ENCODE measurements at regions of chr17 and their contacts with region 1.

Region 1: DNA sequence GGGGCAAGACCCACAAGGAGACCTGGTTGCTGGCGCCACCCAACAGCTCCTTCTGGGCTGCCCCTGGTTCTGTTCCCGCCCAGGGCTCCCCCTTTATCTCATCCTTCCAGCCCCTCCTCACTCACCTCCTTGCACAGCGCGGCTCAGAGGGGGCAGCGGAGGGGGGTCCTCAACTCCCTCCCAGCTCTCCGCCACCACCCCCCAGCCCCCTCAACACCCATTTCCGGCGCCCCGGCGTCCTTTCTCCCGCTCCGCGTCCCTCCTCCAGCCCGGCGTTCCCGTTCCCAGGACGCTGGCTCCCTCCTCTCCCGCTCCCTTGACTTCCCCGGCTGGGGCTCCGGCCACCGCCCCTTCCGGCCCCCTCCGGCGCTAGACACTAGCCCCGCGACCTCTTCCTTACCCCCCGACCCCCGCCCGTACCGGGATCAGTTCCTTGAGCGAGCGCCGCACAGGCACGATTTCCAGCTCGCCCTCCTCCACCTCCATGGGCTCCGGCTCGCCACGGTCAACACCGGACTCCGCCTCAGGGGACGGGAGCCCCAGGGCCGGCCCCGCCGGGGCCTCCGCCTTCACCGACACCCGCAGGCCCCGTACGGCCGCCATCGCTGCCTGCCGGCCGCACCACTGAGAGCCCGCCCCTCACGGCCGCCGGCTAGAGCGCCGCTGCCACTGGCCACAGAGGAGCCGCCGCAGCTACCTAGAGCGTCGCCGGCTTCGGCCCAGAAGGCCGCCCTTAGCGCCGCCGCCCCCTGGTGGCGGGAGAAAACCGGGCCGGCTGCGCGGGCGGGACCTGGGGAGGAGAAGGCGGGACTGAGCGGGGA is at the start of gene NCBP3:
- DNase-seq: peak; percentile 92
- ATAC-seq: peak; percentile 96
- H3K4me3 Mint-ChIP-seq: peak within 1 kb of the TSS; percentile 92
- H3K27ac Mint-ChIP-seq: peak within 1 kb of the TSS; percentile 83
- H3K4me1 Mint-ChIP-seq: peaks cover 21% of the 10 kb centered on the region
- H3K27me3 Mint-ChIP-seq: peaks cover 2% of the 10 kb centered on the region
- CTCF ChIP-seq: no peak
- total RNA-seq, gene NCBP3: 49.5 TPM in 2 replicates

Region 2: GRCh38 chr17:3695723-3696411 is 150.0 kb before region 1 on chr17 and contains the start of gene P2RX5:
- CTCF ChIA-PET with region 1: no interaction called
- POLR2A ChIA-PET with region 1: interaction called, 12 read pairs
- intact Hi-C with region 1: no loop called
- DNase-seq: peak; percentile 66
- ATAC-seq: peak; percentile 58
- H3K4me3 Mint-ChIP-seq: peak within 1 kb of the TSS; percentile 99
- H3K27ac Mint-ChIP-seq: peak within 1 kb of the TSS; percentile 97
- H3K4me1 Mint-ChIP-seq: peaks cover 77% of the 10 kb centered on the region
- H3K27me3 Mint-ChIP-seq: no peaks in the 10 kb centered on the region
- CTCF ChIP-seq: no peak
- total RNA-seq, gene P2RX5: 295 and 349 TPM in 2 replicates

Region 3: GRCh38 chr17:3747805-3748204 is 98.0 kb before region 1 on chr17:
- CTCF ChIA-PET with region 1: no interaction called
- POLR2A ChIA-PET with region 1: no interaction called
- intact Hi-C with region 1: no loop called
- DNase-seq: no peak
- ATAC-seq: no peak
- H3K4me3 Mint-ChIP-seq: no peak overlapping the region
- H3K27ac Mint-ChIP-seq: no peak overlapping the region
- H3K4me1 Mint-ChIP-seq: peaks cover 19% of the 10 kb centered on the region
- H3K27me3 Mint-ChIP-seq: peaks cover 3% of the 10 kb centered on the region
- CTCF ChIP-seq: no peak

Region 4: GRCh38 chr17:3780986-3781385 is 64.8 kb before region 1 on chr17:
- CTCF ChIA-PET with region 1: no interaction called
- POLR2A ChIA-PET with region 1: no interaction called
- intact Hi-C with region 1: no loop called
- DNase-seq: no peak
- ATAC-seq: no peak
- H3K4me3 Mint-ChIP-seq: no peak overlapping the region
- H3K27ac Mint-ChIP-seq: no peak overlapping the region
- H3K4me1 Mint-ChIP-seq: no peaks in the 10 kb centered on the region
- H3K27me3 Mint-ChIP-seq: no peaks in the 10 kb centered on the region
- CTCF ChIP-seq: no peak

Region 5: DNA sequence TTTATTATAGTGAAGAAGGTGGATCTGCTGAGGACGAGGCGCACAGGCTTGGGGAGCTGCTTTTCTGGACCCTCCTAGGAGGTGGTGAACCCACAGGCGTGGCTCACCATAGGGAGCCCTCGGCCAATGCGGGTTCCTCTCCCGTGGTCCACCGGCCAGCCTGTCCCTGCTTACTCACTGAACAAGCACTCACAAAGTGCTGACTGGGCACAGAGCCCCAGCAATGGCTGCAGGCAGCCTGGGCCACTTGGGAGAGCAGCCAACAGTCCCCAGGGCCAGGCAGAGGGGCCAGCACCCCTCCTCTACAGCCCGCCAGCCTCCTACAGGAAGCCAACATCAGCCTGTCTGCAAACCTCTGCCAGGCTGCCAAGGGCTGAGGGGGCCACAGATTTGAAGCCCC is 19.3 kb after region 1 on chr17:
- CTCF ChIA-PET with region 1: interaction called, 10 read pairs
- POLR2A ChIA-PET with region 1: no interaction called
- intact Hi-C with region 1: no loop called
- DNase-seq: no peak
- ATAC-seq: no peak
- H3K4me3 Mint-ChIP-seq: no peak overlapping the region
- H3K27ac Mint-ChIP-seq: no peak overlapping the region
- H3K4me1 Mint-ChIP-seq: no peaks in the 10 kb centered on the region
- H3K27me3 Mint-ChIP-seq: no peaks in the 10 kb centered on the region
- CTCF ChIP-seq: no peak

Region 6: DNA sequence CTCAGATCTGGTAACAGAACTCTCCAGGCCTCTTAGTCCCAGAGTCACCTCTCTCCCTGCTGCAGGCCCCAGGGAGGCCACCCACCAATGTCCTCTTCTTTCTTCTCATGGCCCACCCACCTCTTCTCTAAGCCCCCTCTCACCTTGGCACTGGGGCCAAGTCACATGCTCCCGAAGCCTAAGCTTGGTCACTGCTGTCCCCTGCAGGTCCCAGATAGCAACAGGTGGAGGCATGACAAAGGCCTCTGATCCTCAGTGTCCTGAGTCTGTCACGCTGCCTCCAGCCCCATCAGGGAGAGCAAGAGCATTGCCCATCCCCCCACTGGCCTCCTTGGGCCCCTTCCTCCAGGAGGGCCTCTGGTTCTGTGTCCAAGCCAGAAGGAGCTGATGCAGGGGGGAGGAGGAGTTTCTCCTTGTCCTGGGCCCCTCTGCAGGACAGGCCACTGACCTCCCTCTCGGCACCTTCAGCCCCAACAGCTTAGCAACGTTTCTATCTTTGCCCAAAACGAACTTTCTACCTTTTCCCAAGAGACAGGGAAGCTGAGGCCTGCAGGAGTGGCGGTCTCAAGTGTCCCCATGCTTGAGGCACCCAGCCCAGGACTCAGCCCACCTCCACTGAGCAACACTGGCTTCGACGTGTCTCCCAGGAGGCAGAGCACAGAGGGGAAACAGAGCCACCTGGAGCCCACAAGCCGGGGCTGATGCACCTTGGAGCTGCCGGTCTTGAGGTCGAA is 61.8 kb after region 1 on chr17:
- CTCF ChIA-PET with region 1: interaction called, 16 read pairs
- POLR2A ChIA-PET with region 1: interaction called, 14 read pairs
- intact Hi-C with region 1: loop called (anchors 2 kb)
- DNase-seq: no peak
- ATAC-seq: no peak
- H3K4me3 Mint-ChIP-seq: no peak overlapping the region
- H3K27ac Mint-ChIP-seq: peak overlapping the region; percentile 64
- H3K4me1 Mint-ChIP-seq: peaks cover 65% of the 10 kb centered on the region
- H3K27me3 Mint-ChIP-seq: no peaks in the 10 kb centered on the region
- CTCF ChIP-seq: no peak

Region 7: DNA sequence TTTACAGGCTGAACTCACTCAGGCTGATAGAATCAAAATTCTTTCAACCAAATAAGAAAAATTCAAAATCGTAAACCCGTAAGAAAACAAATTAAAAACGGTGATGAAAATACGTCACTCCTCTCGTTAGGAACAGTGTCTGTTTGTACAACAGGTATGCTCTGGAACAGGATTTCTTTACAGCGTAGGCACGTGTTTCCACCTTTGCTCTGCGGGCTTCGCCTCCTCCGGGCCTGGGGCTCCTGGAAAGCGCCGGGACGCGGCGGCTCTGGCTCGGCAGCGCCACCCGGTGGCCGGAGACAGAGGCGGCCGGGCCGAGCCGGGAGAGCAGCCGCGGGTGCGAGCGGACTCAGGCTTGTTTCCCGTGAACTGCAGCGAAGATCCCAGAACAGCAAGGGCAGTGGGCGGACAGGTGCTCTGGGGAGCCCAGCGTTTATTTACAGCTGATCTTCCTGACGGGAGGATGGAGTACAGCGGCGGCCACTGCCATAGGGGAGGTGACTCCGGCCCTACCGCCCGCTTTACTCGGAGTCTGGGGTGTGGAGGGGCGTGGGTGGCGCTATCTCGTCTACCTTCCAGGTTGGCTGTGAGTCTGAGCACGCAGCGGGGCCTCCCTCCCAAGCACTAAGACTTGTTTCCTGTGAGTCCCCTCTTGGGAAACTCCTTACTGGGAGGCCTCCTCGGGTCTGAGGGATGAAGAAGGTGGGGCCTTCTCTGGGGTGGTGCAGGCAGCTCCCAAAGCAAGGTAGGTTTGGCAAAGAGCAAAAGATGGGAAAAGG is 158.9 kb after region 1 on chr17:
- CTCF ChIA-PET with region 1: interaction called, 4 read pairs
- POLR2A ChIA-PET with region 1: interaction called, 3 read pairs
- intact Hi-C with region 1: loop called (anchors 5 kb)
- DNase-seq: peak; percentile 77
- ATAC-seq: peak; percentile 80
- H3K4me3 Mint-ChIP-seq: peak overlapping the region; percentile 38
- H3K27ac Mint-ChIP-seq: no peak overlapping the region
- H3K4me1 Mint-ChIP-seq: peaks cover 24% of the 10 kb centered on the region
- H3K27me3 Mint-ChIP-seq: no peaks in the 10 kb centered on the region
- CTCF ChIP-seq: peak; percentile 96

Measured in activated B cell treated with CpG ODN at 0.5 μM for 24 hours (primary cell).